ENCODE measurements at regions of chr15 and their contacts with region 1.

Region 1: DNA sequence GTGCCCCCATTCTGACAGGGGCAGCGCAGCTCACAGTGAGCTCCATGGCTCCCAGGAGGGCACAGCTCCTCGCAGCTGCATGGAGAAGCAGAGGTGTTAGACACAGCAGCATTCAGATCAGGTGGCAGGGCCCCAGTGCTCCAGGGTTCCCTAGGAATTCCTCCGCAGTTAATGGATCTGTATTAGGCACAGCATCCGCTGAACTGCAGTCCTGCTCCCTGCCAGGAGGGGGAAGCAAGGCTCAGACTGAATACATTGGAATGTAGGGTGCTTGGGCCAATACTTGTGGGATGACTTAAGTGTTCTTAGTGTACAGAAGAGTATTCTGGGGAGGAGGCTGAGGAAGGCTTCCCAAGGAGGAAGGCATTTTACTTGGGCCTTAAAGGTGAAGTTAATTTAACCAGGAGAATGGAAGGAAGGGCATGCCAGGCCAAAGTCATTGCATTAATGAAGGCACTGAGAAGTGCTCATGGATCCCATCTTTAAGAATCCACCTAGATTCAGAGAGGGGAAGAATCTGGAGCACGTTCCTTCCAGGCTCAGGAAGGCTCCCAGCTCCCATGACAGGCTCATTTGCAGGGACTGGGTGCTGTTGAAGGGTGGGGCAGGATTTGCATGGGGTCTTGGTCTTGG is 111.6 kb downstream of the RAB11A start:
- DNase-seq: peak; percentile 69 to 90
- H3K4me3 ChIP-seq: no peak overlapping the region
- H3K27ac ChIP-seq: no peak overlapping the region
- H3K4me1 ChIP-seq: peaks cover 10 to 21% (median 11%) of the 10 kb centered on the region in 4 experiments
- H3K27me3 ChIP-seq: no peaks in the 10 kb centered on the region
- CTCF ChIP-seq: peak; percentile 80 to 96 (median 86)
- EP300 ChIP-seq: no peak
- POLR2A ChIP-seq: no peak
- RAD21 ChIP-seq: peak; percentile 79 to 86

Region 2: DNA sequence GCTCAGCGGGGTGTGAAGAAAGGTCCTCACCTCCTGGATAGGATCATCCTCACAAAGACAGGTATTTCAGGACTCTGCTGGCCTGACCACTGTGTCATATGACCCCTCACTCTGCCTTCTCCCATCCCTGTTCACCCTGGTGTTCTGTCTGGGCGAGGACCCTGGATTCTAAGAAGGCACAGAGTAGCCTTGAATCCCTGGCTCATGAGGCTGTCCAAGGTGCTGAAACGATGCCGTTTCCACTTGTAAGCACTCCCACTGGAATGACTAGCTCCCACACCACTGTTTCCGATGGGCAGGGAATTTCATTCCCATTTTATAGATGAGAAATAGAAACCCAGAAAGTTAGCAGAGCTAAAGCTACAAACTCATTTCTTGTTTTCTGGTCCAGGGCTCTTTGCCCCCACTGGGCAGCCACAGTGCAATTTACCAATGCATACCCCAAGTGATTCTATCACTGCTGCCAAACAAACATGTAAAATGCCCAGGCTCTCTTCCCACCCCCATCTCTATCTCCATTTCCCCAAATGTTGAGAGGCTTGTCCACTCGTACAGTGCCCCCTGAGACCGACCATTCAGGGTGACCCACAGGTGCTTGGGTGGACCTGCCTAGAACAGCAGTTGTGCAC is 28.4 kb before region 1 on chr15:
- CTCF ChIA-PET with region 1: interaction called, 21 read pairs
- POLR2A ChIA-PET with region 1: interaction called, 3 read pairs
- DNase-seq: peak in 1 of 2 experiments; percentile 74
- H3K4me3 ChIP-seq: no peak overlapping the region
- H3K27ac ChIP-seq: no peak overlapping the region
- H3K4me1 ChIP-seq: peaks cover 4 to 14% (median 10%) of the 10 kb centered on the region in 4 experiments; a peak in 6 of 7 replicates
- H3K27me3 ChIP-seq: no peaks in the 10 kb centered on the region
- CTCF ChIP-seq: no peak
- EP300 ChIP-seq: no peak
- POLR2A ChIP-seq: no peak
- RAD21 ChIP-seq: no peak

Region 3: DNA sequence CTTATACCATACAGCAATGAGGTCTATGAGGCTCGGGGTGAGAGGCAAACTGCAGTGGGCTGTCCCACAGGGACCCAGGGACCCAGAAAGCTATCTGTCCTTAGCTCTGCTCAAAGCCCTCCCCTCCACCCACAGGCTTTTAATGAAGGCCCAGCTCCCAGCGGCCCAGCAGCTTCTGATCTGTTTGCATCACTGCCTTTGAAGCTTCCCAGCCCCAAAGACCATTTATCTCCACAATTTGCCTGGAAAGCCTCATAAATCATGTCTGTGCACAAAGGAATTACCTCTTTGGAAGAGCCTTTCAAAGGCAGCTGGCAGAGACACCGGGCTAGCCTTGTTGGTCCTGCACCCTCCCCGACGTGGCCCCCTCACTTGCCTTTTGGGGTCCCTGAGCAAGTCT is 12.3 kb after region 1 on chr15:
- CTCF ChIA-PET with region 1: interaction called, 70 read pairs
- POLR2A ChIA-PET with region 1: interaction called, 4 read pairs
- DNase-seq: no peak
- H3K4me3 ChIP-seq: no peak overlapping the region
- H3K27ac ChIP-seq: no peak overlapping the region
- H3K4me1 ChIP-seq: peaks cover 0 to 17% (median 5%) of the 10 kb centered on the region in 4 experiments; a peak in 5 of 7 replicates
- H3K27me3 ChIP-seq: no peaks in the 10 kb centered on the region
- CTCF ChIP-seq: no peak
- EP300 ChIP-seq: no peak
- POLR2A ChIP-seq: no peak
- RAD21 ChIP-seq: no peak

Region 4: GRCh38 chr15:66046751-66047150 is 65.8 kb after region 1 on chr15:
- CTCF ChIA-PET with region 1: interaction called, 11 read pairs
- POLR2A ChIA-PET with region 1: no interaction called
- DNase-seq: no peak
- H3K4me3 ChIP-seq: no peak overlapping the region
- H3K27ac ChIP-seq: no peak overlapping the region
- H3K4me1 ChIP-seq: peaks cover 7 to 15% (median 8%) of the 10 kb centered on the region in 4 experiments
- H3K27me3 ChIP-seq: no peaks in the 10 kb centered on the region
- CTCF ChIP-seq: peak in 1 of 3 experiments; percentile 23; a peak in 1 of 4 replicates
- EP300 ChIP-seq: no peak
- POLR2A ChIP-seq: no peak
- RAD21 ChIP-seq: peak; percentile 28 to 46; a peak in 3 of 4 replicates

Region 5: DNA sequence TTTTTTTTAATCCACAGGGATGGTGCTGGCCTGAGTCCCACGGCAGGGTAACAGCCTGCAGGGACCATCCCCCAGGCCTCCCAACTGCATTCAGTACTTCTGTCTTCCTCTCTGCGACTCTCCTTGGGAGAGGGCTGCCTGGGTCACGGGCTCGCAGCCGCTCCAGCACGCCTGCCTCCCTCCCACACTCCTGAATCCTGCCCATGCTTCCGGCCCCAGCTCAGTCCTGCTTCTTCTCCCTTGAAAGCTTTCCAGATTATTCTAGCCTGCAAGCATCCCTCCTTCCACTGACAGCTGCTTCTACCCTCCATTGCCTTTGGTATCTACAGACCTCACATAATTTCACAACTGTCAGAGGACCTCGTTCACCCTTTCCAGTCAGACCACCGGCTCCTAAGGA is 240.2 kb after region 1 on chr15:
- CTCF ChIA-PET with region 1: no interaction called
- POLR2A ChIA-PET with region 1: no interaction called
- DNase-seq: no peak
- H3K4me3 ChIP-seq: no peak overlapping the region
- H3K27ac ChIP-seq: no peak overlapping the region
- H3K4me1 ChIP-seq: peaks cover 0 to 3% (median under 1%) of the 10 kb centered on the region in 4 experiments; a peak in 1 of 7 replicates
- H3K27me3 ChIP-seq: no peaks in the 10 kb centered on the region
- CTCF ChIP-seq: no peak
- EP300 ChIP-seq: no peak
- POLR2A ChIP-seq: no peak
- RAD21 ChIP-seq: no peak